Activated T-helper 2 cell treated with anti-CD3 and anti-CD28 coated beads, Interferon-gamma antibody, Interleukin-2, Interleukin-4, amounts not matched to agents 10 μg/mL and 5 μg/mL and 100 μg/mL, durations not matched to agents 14 hours and 24 hours and 36 hours (primary cell): ENCODE measurements at regions of chr6 and their contacts with region 1.

Region 1: GRCh38 chr6:116444092-116444491 is 17.1 kb upstream of the CALHM6 start:
- DNase-seq: no peak
- H3K4me3 Mint-ChIP-seq: no peak overlapping the region
- H3K27ac Mint-ChIP-seq: no peak overlapping the region
- H3K4me1 Mint-ChIP-seq: peaks cover 20% of the 10 kb centered on the region
- H3K27me3 Mint-ChIP-seq: peaks cover 31% of the 10 kb centered on the region

Region 2: GRCh38 chr6:116387374-116387773 is 56.7 kb before region 1 on chr6:
- intact Hi-C with region 1: loop called (anchors 5 kb)
- DNase-seq: no peak
- H3K4me3 Mint-ChIP-seq: no peak overlapping the region
- H3K27ac Mint-ChIP-seq: no peak overlapping the region
- H3K4me1 Mint-ChIP-seq: peaks cover 25% of the 10 kb centered on the region
- H3K27me3 Mint-ChIP-seq: peaks cover 23% of the 10 kb centered on the region

Region 3: DNA sequence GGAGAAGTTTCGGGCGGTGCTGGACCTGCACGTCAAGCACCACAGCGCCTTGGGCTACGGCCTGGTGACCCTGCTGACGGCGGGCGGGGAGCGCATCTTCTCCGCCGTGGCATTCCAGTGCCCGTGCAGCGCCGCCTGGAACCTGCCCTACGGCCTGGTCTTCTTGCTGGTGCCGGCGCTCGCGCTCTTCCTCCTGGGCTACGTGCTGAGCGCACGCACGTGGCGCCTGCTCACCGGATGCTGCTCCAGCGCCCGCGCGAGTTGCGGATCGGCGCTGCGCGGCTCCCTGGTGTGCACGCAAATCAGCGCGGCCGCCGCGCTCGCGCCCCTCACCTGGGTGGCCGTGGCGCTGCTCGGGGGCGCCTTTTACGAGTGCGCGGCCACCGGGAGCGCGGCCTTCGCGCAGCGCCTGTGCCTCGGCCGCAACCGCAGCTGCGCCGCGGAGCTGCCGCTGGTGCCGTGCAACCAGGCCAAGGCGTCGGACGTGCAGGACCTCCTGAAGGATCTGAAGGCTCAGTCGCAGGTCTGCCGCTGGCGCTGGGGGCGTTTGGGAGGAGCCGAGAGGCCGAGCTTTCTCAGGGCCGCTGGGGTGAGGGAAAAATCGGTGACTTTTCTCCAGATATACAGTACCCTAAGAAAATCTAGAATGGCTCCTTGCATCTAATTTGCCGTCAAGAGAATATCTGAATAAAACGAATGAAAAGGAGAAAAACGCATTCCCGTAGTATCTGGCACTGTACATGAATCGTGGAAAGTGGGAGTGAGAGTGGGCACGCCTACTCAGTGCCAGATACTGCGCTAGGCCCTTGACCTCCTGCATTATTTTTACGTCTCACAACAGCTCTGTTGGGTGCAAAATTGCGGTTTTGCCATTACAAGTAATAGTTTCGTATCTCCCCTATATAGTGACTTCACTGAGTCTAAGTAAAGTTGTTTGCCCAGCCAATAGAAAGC is 18.1 kb after region 1 on chr6:
- intact Hi-C with region 1: loop called (anchors 2 kb)
- DNase-seq: peak; percentile 50
- H3K4me3 Mint-ChIP-seq: peak overlapping the region; percentile 73
- H3K27ac Mint-ChIP-seq: peak overlapping the region; percentile 28
- H3K4me1 Mint-ChIP-seq: peaks cover 55% of the 10 kb centered on the region
- H3K27me3 Mint-ChIP-seq: peaks cover 31% of the 10 kb centered on the region